ENCODE measurements at regions of chr22 and their contacts with region 1.

Region 1: DNA sequence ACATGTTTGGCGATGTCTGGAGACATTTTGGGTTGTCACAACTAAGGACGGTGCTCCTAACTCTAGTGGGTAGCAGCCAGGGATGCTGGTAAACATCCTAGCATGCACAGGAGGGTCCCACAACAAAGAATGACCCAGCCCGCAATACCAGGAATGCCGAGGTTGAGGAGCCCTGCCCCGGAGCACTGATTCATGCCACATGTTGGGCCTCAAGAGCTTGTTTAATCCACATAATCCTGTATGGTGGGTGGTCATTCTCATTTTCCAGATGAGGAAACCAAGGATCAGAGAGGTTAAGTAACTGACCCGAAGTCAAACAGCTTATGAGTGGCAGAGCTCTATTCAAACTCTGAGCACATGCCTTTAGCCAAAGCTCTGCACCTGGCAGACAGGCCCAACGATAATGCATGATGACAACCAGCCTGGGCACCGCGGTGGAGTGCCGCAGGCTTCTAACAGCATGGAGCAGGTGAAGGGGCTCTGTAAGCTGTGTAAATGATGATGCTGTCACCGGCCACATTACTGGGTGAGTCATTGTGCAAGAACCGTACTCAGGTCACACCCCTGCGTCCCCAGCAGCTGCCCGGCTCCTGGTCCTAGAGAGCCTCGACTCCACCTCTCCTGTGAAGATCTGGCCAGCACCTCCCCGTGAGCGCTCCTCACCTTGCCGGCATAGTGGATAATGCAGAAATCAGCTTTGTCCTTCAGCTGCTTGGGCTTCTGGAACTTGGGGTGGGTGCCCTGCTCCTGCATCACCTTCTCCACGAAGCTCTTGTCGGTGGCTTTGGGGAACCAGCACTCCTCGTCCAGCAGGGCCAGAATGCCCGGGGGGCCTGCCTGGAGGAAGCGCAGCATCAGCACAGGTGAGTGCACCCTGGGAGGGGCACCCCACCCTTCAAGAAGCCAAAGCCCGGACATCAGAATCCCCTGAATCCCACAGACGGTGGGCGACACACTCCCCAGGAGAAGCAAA is 58.7 kb downstream of the APOL1 start:
- DNase-seq: no peak
- H3K4me3 Mint-ChIP-seq: no peak overlapping the region
- H3K27ac Mint-ChIP-seq: no peak overlapping the region
- H3K4me1 Mint-ChIP-seq: no peaks in the 10 kb centered on the region
- H3K27me3 Mint-ChIP-seq: no peaks in the 10 kb centered on the region
- CTCF ChIP-seq: no peak

Region 2: GRCh38 chr22:35921777-35922176 is 389.9 kb before region 1 on chr22:
- CTCF ChIA-PET with region 1: interaction called, 11 read pairs
- intact Hi-C with region 1: no loop called
- DNase-seq: peak; percentile 79
- H3K4me3 Mint-ChIP-seq: no peak overlapping the region
- H3K27ac Mint-ChIP-seq: no peak overlapping the region
- H3K4me1 Mint-ChIP-seq: peaks cover 10% of the 10 kb centered on the region
- H3K27me3 Mint-ChIP-seq: no peaks in the 10 kb centered on the region
- CTCF ChIP-seq: peak; percentile 42

Measured in Calu3 (cell line).